ENCODE measurements at regions of chr5 and their contacts with region 1.

Region 1: GRCh38 chr5:141878711-141879425 is 658 bp upstream of the PCDH1 start:
- DNase-seq: peak; percentile 17
- H3K4me3 ChIP-seq: peak overlapping the region; percentile 19
- CTCF ChIP-seq: peak; percentile 97

Region 2: DNA sequence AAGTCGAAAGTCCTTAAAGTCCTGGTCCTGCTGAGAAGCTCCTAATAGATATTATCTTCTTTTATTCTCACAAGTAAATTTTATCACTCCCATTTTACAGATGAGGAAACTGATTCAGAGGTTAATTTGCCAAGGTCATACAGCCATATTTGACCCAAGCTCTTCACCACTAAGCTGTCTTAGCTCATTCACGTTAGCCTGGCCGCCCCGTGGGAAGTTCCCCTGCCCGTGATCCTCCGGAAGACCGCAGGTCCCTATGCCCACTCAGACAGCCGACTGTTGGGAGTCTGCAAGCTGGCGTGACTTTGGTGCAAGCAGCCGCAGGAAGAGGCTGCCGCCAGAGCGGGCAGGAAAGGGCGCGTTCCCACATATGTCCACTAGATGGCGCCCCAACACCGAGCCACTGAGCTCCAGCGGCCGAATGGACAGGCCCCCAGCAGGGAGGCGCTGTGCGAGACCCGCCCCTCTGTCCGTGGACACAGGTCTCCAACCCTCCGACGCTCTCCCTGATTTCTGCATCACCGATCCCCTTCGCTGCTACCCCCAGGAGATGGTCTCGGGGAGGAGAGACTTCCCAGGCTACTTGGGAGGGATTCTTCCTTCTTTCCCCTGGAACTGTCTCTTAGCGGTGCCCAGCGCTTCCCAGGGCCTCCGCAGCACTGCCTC is 186.9 kb before region 1 on chr5:
- CTCF ChIA-PET with region 1: interaction called, 567 read pairs
- POLR2A ChIA-PET with region 1: no interaction called
- DNase-seq: no peak
- H3K4me3 ChIP-seq: peak overlapping the region; percentile 61
- CTCF ChIP-seq: peak; percentile 99

Region 3: DNA sequence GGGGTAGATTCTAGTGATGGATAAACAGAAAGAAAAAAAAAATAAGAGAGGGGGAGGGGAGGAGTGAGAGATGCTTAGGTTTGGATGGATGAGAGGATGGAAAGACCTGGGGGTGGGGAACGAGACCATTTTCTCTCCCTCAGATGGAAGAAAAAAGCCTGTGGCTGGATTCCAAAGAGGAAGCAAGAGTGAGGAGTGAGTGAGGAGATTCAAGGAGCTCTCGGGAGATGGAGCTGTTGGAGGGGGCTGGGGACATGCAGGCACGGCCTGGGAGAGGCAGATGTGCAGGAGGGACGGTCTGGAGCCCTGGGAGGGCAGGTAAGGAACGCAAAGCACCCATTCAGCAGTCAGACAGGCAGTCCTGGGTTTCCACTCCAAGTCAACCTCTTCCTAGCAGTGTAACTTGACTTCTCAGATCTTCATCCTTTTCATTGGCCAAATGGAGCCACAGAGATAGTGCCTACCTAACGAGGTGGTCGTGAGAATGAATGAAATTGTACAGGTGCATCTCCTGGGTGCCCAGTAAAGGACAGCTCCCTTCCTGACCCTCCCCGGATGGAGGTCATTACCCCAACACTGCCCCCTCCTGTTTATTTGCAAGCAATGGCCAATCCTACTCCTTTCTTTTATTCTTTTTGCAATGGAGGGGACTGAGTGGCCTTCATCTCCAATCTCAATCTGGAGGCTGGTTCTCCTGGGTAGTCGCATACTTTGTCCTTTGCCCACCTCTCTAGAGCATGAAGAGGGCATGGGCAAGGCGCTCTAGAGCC is 52.9 kb before region 1 on chr5:
- CTCF ChIA-PET with region 1: interaction called, 11 read pairs
- POLR2A ChIA-PET with region 1: no interaction called
- DNase-seq: no peak
- H3K4me3 ChIP-seq: no peak overlapping the region
- CTCF ChIP-seq: no peak

Region 4: DNA sequence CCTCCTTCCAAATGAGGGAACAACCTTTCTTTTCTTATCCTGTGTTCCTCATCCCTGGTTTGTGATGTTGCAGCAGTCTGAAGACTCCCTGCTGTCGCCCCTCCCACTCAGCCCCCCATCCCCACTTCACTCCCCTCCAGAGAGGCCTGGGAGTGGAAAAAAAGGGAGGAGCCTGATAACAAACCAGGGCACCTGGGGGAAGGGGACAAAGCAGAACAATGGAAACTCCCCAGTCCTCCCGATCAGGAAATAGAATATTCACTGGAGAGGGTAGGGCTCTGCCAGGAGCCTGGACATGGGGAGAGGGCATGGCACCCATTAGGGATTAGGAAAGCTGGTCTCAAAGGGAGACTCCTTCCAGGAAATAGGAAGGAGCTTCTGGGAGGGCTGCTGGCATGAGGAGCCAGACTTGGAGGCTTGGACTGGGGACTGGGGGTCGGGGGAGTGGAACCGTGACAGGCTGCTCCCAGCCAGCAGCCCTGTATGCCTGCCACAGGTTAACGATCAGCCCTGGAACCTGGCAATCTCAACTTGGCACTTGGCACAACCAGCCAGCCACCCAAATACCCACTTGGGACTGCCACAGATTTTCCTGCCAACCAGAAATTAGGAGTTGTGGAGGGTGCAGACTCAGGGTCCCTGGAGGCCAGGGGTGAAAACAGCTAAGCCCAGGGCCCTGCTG is 20.6 kb before region 1 on chr5:
- CTCF ChIA-PET with region 1: interaction called, 20 read pairs
- POLR2A ChIA-PET with region 1: no interaction called
- DNase-seq: no peak
- H3K4me3 ChIP-seq: no peak overlapping the region
- CTCF ChIP-seq: no peak

Region 5: GRCh38 chr5:141903261-141903660 is 24.4 kb after region 1 on chr5:
- CTCF ChIA-PET with region 1: interaction called, 27 read pairs
- POLR2A ChIA-PET with region 1: no interaction called
- DNase-seq: no peak
- H3K4me3 ChIP-seq: no peak overlapping the region
- CTCF ChIP-seq: no peak

Region 6: GRCh38 chr5:141940695-141941271 is 61.9 kb after region 1 on chr5:
- CTCF ChIA-PET with region 1: interaction called, 13 read pairs
- POLR2A ChIA-PET with region 1: no interaction called
- DNase-seq: no peak
- H3K4me3 ChIP-seq: no peak overlapping the region
- CTCF ChIP-seq: no peak